HCT116 (cell line): ENCODE measurements at regions of chr6 and their contacts with region 1.

Region 1: GRCh38 chr6:27237089-27237803 is 10.3 kb upstream of the PRSS16 start:
- DNase-seq: peak; percentile 67
- ATAC-seq: peak; percentile 86
- H3K4me3 ChIP-seq: no peak overlapping the region
- H3K27ac ChIP-seq: peak overlapping the region; percentile 6; the same call in 1 of the 2 replicates
- H3K4me1 ChIP-seq: peaks cover 8 to 23% of the 10 kb centered on the region in 2 experiments; a peak in 3 of 4 replicates
- H3K27me3 ChIP-seq: no peaks in the 10 kb centered on the region
- CTCF ChIP-seq: no peak
- POLR2A ChIP-seq: no peak
- RAD21 ChIP-seq: no peak

Region 2: DNA sequence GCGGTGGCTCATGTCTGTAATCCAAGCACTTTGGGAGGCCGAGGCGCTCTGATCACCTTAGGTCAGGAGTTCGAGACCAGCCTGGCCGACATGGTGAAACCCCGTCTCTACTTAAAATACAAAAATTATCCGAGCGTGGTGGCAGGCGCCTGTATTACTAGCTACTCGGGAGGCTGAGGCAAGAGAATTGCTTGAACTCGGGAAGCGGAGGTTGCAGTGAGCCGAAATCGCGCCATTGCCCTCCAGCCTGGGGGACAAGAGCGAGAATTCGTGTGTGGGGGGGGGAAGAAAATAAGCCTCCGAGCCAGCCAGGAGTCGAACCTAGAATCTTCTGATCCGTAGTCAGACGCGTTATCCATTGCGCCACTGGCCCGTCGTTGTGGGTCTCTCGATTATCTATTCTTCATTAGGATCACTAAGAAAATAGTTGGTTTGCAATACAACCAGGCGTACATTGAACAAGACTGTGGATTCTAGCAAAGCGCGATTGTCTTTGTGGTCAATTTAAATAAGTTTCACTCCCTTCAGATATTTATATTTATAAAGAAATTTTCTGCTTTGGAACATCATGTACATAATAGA is 23.6 kb before region 1 on chr6:
- CTCF ChIA-PET with region 1: no interaction called
- POLR2A ChIA-PET with region 1: no interaction called
- RAD21 ChIA-PET with region 1: no interaction called
- intact Hi-C with region 1: no loop called
- DNase-seq: no peak
- ATAC-seq: 0 out of 2 replicates have a peak, but pooled peaks have one; percentile 17
- H3K4me3 ChIP-seq: no peak overlapping the region
- H3K27ac ChIP-seq: no peak overlapping the region
- H3K4me1 ChIP-seq: peaks cover 0 to 3% of the 10 kb centered on the region in 2 experiments; a peak in 1 of 4 replicates
- H3K27me3 ChIP-seq: no peaks in the 10 kb centered on the region
- CTCF ChIP-seq: no peak
- POLR2A ChIP-seq: no peak
- RAD21 ChIP-seq: no peak

Region 3: GRCh38 chr6:27251606-27252251 is 14.5 kb after region 1 on chr6:
- CTCF ChIA-PET with region 1: interaction called, 12 read pairs
- POLR2A ChIA-PET with region 1: interaction called, 10 read pairs
- RAD21 ChIA-PET with region 1: no interaction called
- intact Hi-C with region 1: no loop called
- DNase-seq: peak; percentile 85
- ATAC-seq: peak; percentile 91
- H3K4me3 ChIP-seq: peak overlapping the region; percentile 63 to 65
- H3K27ac ChIP-seq: peak overlapping the region; percentile 68
- H3K4me1 ChIP-seq: peaks cover 2 to 18% of the 10 kb centered on the region in 2 experiments; a peak in 3 of 4 replicates
- H3K27me3 ChIP-seq: no peaks in the 10 kb centered on the region
- CTCF ChIP-seq: peak; percentile 43 to 69 (median 56); a peak in 5 of 6 replicates
- POLR2A ChIP-seq: peak; percentile 13
- RAD21 ChIP-seq: peak; percentile 53

Region 4: DNA sequence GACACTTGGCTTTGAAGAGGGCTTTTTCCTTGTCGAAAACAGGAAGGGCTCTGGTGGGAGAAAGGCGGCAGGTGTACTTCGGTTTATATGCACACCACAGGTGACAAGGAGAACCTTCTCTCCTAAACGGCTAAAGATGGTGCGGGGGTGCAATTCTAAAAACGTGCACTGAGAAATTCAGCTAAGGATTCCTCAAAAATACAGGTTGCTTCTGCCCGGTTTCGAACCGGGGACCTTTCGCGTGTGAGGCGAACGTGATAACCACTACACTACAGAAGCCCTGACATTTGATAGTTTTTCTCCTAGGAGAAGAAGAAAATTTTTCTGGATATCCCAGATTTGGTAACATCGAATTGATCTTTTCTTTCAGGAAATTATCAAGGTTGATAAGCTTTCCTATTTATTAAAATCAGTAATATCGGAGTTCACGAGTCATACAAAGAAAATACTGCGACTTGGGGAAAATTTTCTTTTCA is 42.9 kb after region 1 on chr6:
- CTCF ChIA-PET with region 1: no interaction called
- POLR2A ChIA-PET with region 1: no interaction called
- RAD21 ChIA-PET with region 1: no interaction called
- intact Hi-C with region 1: loop called (anchors 2 kb)
- DNase-seq: peak; percentile 45
- ATAC-seq: peak; percentile 81
- H3K4me3 ChIP-seq: peak overlapping the region; percentile 40 to 54
- H3K27ac ChIP-seq: peak overlapping the region; percentile 61; the same call in 1 of the 2 replicates
- H3K4me1 ChIP-seq: peaks cover 3 to 17% of the 10 kb centered on the region in 2 experiments; a peak in 3 of 4 replicates
- H3K27me3 ChIP-seq: no peaks in the 10 kb centered on the region
- CTCF ChIP-seq: no peak
- POLR2A ChIP-seq: no peak
- RAD21 ChIP-seq: no peak